ENCODE measurements at regions of chr2 and their contacts with region 1.

Region 1: DNA sequence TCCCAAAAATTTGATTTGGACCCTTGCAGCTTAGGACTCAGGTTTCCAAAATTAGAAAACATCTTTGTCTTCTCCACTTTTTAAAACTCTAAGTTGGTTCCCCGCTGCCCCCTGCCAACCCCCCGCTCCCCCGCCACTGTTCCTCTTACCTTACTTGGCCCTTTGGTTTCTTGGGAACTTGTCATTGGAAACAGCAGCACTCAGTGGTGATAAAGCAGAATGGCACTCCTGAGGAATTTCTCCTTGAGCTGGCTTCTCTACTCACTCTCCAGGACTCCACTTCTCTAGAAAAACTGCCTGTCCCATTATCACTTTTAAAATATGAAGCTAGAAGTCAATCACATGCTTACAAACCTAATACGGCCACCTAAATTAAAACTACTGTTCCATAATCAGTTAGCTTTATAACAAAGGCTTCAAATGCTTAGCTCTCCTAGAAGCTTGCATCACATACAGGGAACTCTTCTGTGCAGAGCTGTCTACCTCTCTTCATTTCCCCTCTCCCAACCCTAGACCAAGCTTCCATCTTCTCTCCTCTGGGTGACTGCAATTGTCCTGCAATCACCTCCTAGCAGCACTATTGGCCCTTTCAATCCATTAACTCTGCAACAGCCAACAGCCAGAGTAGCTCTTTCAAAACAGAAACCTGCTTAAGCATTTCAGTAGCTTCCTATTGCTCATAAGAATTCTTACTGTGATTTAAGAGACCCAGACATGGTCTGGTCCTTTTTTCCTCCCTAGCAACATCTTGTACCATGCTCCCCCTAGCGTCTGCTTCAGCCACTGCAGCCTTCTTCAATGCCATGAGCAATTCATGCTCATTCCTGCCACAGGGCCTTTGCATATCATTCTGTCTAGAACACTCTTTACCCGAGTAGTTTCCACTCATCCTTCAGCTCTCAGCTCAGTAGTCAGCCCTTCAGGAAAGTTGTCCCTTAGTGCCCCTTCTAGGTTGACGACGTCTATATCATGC is 15.2 kb upstream of the PLEKHM3 start:
- DNase-seq: peak in 1 of 2 experiments; percentile 84
- H3K4me3 ChIP-seq: no peak overlapping the region
- H3K27ac ChIP-seq: no peak overlapping the region
- H3K4me1 ChIP-seq: peaks cover 0 to 13% (median 7%) of the 10 kb centered on the region in 4 experiments; a peak in 2 of 7 replicates
- H3K27me3 ChIP-seq: no peaks in the 10 kb centered on the region
- CTCF ChIP-seq: peak; percentile 62 to 94 (median 69)
- EP300 ChIP-seq: no peak
- POLR2A ChIP-seq: no peak
- RAD21 ChIP-seq: peak; percentile 77 to 79

Region 2: GRCh38 chr2:207710814-207711740 is 329.4 kb before region 1 on chr2 and contains the start of gene CCNYL1:
- CTCF ChIA-PET with region 1: interaction called, 12 read pairs
- POLR2A ChIA-PET with region 1: no interaction called
- DNase-seq: peak; percentile 95 to 99
- H3K4me3 ChIP-seq: peak within 1 kb of the TSS; percentile 71 to 91 (median 84)
- H3K27ac ChIP-seq: peak within 1 kb of the TSS; percentile 41; the same call in 1 of the 2 replicates
- H3K4me1 ChIP-seq: peaks cover 0 to 3% (median under 1%) of the 10 kb centered on the region in 4 experiments; a peak in 4 of 7 replicates
- H3K27me3 ChIP-seq: no peaks in the 10 kb centered on the region
- CTCF ChIP-seq: no peak
- EP300 ChIP-seq: no peak
- POLR2A ChIP-seq: peak; percentile 97 to 99
- RAD21 ChIP-seq: no peak
- total RNA-seq, gene CCNYL1: 35.4 and 36.2 TPM in 2 replicates

Region 3: DNA sequence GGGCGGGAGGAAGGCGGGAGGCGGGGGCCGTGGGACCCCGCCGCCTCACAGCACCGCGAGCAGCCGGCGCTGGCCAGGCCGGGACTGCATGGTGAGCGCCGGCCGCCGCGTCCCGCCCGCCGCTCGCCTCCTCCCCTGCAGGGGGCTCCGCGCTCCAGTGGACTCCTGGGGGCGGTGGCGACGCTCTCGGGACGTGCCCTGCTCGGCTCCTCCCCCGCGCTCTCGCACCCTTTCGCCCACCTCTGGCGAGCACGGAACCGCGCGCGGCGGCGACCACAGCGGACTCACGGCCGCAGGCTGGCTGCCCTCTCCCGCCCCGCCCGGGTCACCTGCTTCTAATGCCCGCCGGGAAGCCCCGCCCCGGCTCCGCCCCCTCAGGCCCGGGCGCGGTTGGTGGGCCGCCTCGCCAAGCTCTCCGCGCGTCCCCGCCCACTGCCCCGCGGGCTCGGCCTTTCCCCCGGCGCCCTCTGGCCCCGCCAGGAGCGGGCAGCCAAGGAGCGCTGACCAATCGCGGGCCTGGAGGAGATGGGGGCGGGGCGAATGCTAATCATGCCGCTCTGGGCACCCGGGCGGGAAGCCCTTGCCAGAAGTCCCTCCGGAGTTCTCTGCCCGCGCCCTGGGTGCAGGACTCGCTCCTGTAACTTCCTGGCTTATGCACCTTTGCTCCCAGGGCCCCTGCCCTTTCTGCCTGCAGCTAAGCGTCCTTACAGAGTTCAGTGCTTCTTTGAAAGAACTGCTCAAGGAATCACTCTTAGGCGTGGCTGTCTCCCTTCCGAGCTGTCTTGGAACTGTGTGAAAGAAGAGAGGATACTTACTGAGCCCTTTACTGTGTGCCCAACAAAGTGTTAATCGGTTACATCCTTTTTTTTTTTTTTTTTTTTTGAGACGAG is 270.6 kb before region 1 on chr2 and contains the start of gene FZD5:
- CTCF ChIA-PET with region 1: interaction called, 69 read pairs
- POLR2A ChIA-PET with region 1: interaction called, 4 read pairs
- DNase-seq: peak; percentile 94 to 99
- H3K4me3 ChIP-seq: peak within 1 kb of the TSS; percentile 84 to 96 (median 86)
- H3K27ac ChIP-seq: peak within 1 kb of the TSS; percentile 24; the same call in 1 of the 2 replicates
- H3K4me1 ChIP-seq: peaks cover 0 to 32% (median 26%) of the 10 kb centered on the region in 4 experiments; a peak in 6 of 7 replicates
- H3K27me3 ChIP-seq: peaks cover 0 to 4% (median 1%) of the 10 kb centered on the region in 4 experiments; a peak in 1 of 7 replicates
- CTCF ChIP-seq: peak; percentile 17 to 27 (median 25); a peak in 3 of 4 replicates
- EP300 ChIP-seq: no peak
- POLR2A ChIP-seq: peak; percentile 73 to 89
- RAD21 ChIP-seq: peak; percentile 28 to 48; a peak in 3 of 4 replicates
- total RNA-seq, gene FZD5: 55.2 and 56.6 TPM in 2 replicates

Region 4: GRCh38 chr2:207836521-207837133 is 203.9 kb before region 1 on chr2:
- CTCF ChIA-PET with region 1: interaction called, 11 read pairs
- POLR2A ChIA-PET with region 1: no interaction called
- DNase-seq: peak in 1 of 2 experiments; percentile 35
- H3K4me3 ChIP-seq: no peak overlapping the region
- H3K27ac ChIP-seq: no peak overlapping the region
- H3K4me1 ChIP-seq: peaks cover 0 to 5% (median 3%) of the 10 kb centered on the region in 4 experiments; a peak in 4 of 7 replicates
- H3K27me3 ChIP-seq: no peaks in the 10 kb centered on the region
- CTCF ChIP-seq: no peak
- EP300 ChIP-seq: no peak
- POLR2A ChIP-seq: no peak
- RAD21 ChIP-seq: no peak

Region 5: GRCh38 chr2:207960090-207960489 is 80.4 kb before region 1 on chr2:
- CTCF ChIA-PET with region 1: interaction called, 10 read pairs
- POLR2A ChIA-PET with region 1: no interaction called
- DNase-seq: no peak
- H3K4me3 ChIP-seq: no peak overlapping the region
- H3K27ac ChIP-seq: no peak overlapping the region
- H3K4me1 ChIP-seq: peaks cover 0 to 3% (median 1%) of the 10 kb centered on the region in 4 experiments; a peak in 2 of 7 replicates
- H3K27me3 ChIP-seq: no peaks in the 10 kb centered on the region
- CTCF ChIP-seq: no peak
- EP300 ChIP-seq: no peak
- POLR2A ChIP-seq: no peak
- RAD21 ChIP-seq: no peak

Region 6: DNA sequence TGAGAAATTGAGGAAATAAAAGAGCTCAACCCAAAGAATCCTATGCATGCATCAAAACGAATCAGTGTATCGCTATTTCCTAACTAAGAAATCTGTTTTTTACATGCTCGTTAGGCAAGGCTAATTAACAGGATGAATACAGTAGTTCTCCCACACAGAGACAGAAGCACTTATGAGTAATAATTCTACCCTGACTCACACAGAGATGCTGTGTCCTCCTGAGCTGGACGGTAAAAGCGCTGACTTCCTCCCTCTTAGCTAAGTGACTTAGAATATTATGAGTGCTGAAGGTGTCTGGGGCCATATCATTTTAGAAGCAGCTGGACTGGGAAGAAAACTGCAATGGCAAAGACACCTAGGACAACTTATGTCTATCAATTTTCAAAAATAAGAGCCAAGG is 33.7 kb before region 1 on chr2:
- CTCF ChIA-PET with region 1: interaction called, 13 read pairs
- POLR2A ChIA-PET with region 1: no interaction called
- DNase-seq: no peak
- H3K4me3 ChIP-seq: no peak overlapping the region
- H3K27ac ChIP-seq: no peak overlapping the region
- H3K4me1 ChIP-seq: peaks cover 0 to 4% (median under 1%) of the 10 kb centered on the region in 4 experiments; a peak in 4 of 7 replicates
- H3K27me3 ChIP-seq: no peaks in the 10 kb centered on the region
- CTCF ChIP-seq: no peak
- EP300 ChIP-seq: no peak
- POLR2A ChIP-seq: no peak
- RAD21 ChIP-seq: no peak

Region 7: GRCh38 chr2:208062113-208062512 is 21.6 kb after region 1 on chr2:
- CTCF ChIA-PET with region 1: interaction called, 21 read pairs
- POLR2A ChIA-PET with region 1: no interaction called
- DNase-seq: no peak
- H3K4me3 ChIP-seq: no peak overlapping the region
- H3K27ac ChIP-seq: no peak overlapping the region
- H3K4me1 ChIP-seq: no peaks in the 10 kb centered on the region
- H3K27me3 ChIP-seq: no peaks in the 10 kb centered on the region
- CTCF ChIP-seq: peak in 2 of 3 experiments; percentile 48 to 60; a peak in 2 of 4 replicates
- EP300 ChIP-seq: no peak
- POLR2A ChIP-seq: no peak
- RAD21 ChIP-seq: peak; percentile 76 to 78

Region 8: DNA sequence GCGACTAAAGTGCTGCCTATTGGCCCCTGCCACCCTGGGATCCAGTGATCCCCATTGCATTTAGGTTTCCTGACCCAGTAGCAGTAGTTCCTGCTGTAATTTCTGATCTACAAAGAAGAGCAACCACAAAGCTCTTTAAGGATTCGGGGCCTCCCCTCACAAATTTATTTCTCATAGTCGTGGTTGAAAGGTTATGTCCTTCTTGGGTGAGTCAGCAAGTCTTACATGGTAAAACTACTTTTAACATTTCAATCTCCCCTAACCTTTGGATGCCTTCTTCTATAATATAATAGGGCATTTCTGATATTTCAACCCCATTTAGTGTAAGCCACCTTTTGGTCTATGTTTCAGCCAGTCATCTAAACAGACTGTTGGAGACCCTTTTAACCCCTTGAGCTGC is 240.4 kb after region 1 on chr2:
- CTCF ChIA-PET with region 1: no interaction called
- POLR2A ChIA-PET with region 1: no interaction called
- DNase-seq: no peak
- H3K4me3 ChIP-seq: no peak overlapping the region
- H3K27ac ChIP-seq: no peak overlapping the region
- H3K4me1 ChIP-seq: no peaks in the 10 kb centered on the region
- H3K27me3 ChIP-seq: no peaks in the 10 kb centered on the region
- CTCF ChIP-seq: no peak
- EP300 ChIP-seq: no peak
- POLR2A ChIP-seq: no peak
- RAD21 ChIP-seq: no peak